Posterior cingulate gyrus (tissue), 11 donors: ENCODE measurements at regions of chr3 and their contacts with region 1.

Region 1: GRCh38 chr3:15557511-15557946 is 36.0 kb upstream of the COLQ start:
- DNase-seq: no peak

Region 2: GRCh38 chr3:15427182-15427880 is 130.2 kb before region 1 on chr3 and contains the starts of genes EAF1 and METTL6:
- intact Hi-C with region 1: loop called (anchors 5 kb)
- DNase-seq: peak; percentile 78 to 98 (median 88)

Region 3: DNA sequence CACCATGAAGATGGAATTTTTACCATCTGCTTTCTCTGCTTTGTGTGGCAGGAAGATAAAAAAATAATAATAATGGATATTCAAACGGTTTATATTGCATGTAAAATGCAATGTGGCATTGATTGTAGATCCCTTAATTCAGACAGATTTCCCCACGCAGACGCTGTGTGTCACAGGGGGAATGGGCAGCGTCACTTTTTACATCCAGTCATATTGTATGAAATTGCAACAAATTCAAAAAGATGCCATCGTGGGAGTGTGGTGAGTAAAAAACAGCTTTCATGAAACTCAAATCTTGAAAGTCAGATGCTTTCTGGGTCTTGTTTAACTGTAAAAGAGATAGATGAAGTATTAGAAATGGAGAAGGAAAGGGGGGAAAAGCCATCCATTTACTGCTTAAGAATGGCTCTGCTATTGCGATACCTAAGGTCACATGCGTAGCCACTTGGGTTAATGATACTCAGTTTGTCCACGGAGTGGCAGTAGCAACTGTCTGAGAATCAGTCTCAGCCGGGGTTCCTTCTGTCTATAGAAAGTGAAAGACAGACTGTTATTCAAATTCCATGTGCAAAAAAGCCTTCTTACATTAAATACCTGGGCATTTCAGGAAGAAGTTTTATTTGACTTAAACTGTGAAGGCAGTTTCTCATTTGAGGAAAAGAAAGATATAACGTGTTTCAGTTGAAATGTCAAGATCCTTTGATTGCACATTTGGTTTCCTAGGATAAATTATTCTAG is 72.5 kb after region 1 on chr3:
- intact Hi-C with region 1: no loop called
- DNase-seq: peak in 6 of 10 donors; percentile 39 to 92 (median 66)